ENCODE measurements at regions of chr10 and their contacts with region 1.

Region 1: DNA sequence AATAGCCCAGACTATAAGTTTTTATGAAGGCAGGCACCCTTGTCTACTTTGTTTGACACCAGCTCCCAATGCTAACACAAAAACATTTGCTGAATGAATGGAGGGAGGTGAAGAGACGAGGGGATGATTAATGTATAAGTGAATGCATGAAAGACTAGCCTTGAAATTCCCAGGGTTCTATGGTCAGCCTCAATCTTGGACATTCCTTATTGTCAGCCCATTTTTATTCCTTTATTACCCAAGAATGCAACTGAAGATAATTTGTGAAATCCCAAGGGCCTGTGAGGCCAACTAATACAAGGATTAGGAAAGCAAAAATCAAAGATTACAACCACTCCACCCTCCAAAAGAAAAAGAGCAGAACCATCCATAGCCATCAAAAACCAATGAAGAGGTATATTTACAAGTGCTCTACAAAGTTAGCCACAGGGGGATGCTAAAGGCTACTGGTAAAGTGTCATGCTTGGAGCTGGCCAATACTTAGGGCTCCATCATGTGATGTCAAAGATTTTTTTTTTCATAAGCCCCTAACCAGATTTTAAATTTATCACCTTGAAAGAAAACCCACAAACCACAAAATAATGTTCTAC is 40.0 kb upstream of the ASAH2 start:
- DNase-seq: no peak
- ATAC-seq: peak in 1 of 2 donors; percentile 69

Region 2: DNA sequence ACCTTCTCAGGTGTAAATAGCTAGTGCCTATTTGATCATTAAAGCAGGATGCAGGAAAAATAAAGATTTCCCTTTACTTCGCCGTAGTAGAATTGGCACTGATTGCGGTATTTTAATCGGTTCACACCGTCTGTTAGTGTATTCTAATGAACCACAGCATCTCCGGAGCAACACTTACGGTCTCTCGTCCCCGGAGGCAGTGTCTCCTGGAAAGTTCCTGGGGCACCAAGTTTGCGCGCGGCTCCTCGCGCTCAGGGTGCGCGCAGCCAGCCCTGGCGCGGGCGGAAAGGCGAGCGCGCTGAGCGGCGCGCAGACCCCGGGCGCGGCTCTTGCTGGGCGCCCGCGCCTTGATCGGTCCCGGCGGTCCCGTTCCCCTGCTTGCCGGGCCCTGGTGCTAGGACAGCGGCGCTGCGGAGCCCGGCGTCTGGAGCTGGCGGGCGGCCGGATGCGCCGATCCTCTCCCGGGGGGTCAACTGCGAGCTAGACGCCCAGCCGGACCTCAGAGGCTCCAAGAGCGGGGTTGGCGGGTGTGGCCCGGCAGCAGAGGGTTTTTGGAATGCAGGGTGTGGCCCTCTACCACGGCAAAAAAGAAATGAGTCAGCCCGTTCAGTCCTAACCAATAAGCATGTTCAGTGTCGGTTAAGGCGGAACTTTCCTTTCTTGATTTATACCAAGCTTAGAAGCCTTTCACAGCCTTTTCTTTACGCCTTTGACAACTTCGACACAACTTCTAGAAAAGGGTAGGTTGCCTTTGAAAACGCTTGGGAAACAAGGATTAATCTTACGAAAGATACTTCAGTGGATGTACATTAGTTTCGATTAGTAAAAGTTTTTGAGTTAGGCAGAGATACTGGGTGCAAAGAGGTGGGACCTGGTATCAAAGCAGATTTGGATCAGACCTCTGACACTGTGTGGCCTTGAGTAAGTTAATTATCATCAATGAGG is 126.8 kb after region 1 on chr10:
- intact Hi-C with region 1: loop called in 1 of 2 experiments (anchors 5 kb)
- DNase-seq: peak; percentile 84
- ATAC-seq: peak; percentile 86 to 98

Region 3: GRCh38 chr10:50636618-50637579 is 345.5 kb after region 1 on chr10:
- intact Hi-C with region 1: loop called in 1 of 2 experiments (anchors 10 kb)
- DNase-seq: no peak
- ATAC-seq: no peak